ENCODE measurements at regions of chr12 and their contacts with region 1.

Region 1: GRCh38 chr12:85057370-85057963 is 21.3 kb downstream of the LRRIQ1 start:
- DNase-seq: peak; percentile 13
- CTCF ChIP-seq: peak; percentile 74

Region 2: GRCh38 chr12:84874125-84874824 is 183.2 kb before region 1 on chr12:
- CTCF ChIA-PET with region 1: interaction called, 40 read pairs
- POLR2A ChIA-PET with region 1: no interaction called
- DNase-seq: peak; percentile 24
- CTCF ChIP-seq: peak; percentile 70

Region 3: DNA sequence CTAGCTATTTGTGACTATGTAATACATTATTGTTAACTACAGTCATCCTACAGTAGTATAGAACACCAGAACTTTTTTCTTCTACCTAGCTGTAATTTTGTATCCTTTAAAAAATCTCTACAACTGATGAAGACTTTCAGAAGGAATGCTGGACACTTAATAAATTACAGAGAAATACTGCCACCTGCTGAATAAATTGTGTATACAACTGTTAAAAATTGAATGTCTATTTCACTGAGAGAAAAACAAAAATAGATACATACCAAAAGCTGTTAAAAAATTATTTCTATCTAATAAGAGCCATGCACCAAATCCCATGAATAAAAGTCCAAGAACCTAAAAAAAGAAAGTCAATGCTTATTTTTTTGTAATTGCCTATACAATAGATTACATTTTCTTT is 28.0 kb before region 1 on chr12:
- CTCF ChIA-PET with region 1: interaction called, 16 read pairs
- POLR2A ChIA-PET with region 1: no interaction called
- DNase-seq: peak; percentile 8
- CTCF ChIP-seq: peak; percentile 40

Region 4: GRCh38 chr12:85036241-85036707 is 21.2 kb before region 1 on chr12 and contains the starts of genes LRRIQ1 and TSPAN19:
- CTCF ChIA-PET with region 1: interaction called, 16 read pairs
- POLR2A ChIA-PET with region 1: no interaction called
- DNase-seq: peak; percentile 57
- CTCF ChIP-seq: no peak

Region 5: GRCh38 chr12:85076688-85077430 is 19.4 kb after region 1 on chr12:
- CTCF ChIA-PET with region 1: interaction called, 22 read pairs
- POLR2A ChIA-PET with region 1: no interaction called
- DNase-seq: peak; percentile 12
- CTCF ChIP-seq: peak; percentile 28

Region 6: DNA sequence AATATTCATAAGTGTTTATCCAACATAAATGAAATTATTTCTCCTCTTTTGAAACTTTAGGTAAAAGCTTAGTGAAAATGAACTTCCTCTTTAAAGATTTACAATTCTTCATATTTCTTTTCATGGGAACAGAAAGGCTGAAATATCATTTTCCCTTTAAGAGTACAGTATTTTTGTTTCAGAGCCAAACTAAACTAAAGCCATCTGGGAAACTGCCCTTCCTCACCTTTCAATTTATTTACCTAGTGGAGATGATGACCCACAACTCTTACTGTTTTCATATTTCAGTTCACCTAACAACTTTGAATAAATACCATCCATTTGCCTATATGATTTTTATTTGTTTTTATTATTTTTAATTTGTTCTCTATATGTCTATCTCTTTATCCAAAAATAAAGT is 327.9 kb after region 1 on chr12:
- CTCF ChIA-PET with region 1: no interaction called
- POLR2A ChIA-PET with region 1: no interaction called
- DNase-seq: no peak
- CTCF ChIP-seq: no peak